Activated B cell treated with CpG ODN at 0.5 μM for 24 hours (primary cell): ENCODE measurements at regions of chr14 and their contacts with region 1.

Region 1: GRCh38 chr14:69354383-69355153 is 43.5 kb downstream of the ERH start:
- DNase-seq: peak; percentile 60
- ATAC-seq: peak; percentile 88
- H3K4me3 Mint-ChIP-seq: peak overlapping the region; percentile 86
- H3K27ac Mint-ChIP-seq: peak overlapping the region; percentile 99
- H3K4me1 Mint-ChIP-seq: peaks cover 52% of the 10 kb centered on the region
- H3K27me3 Mint-ChIP-seq: no peaks in the 10 kb centered on the region
- CTCF ChIP-seq: no peak

Region 2: GRCh38 chr14:69260861-69261564 is 93.6 kb before region 1 on chr14:
- CTCF ChIA-PET with region 1: no interaction called
- POLR2A ChIA-PET with region 1: no interaction called
- intact Hi-C with region 1: loop called (anchors 5 kb)
- DNase-seq: peak; percentile 52
- ATAC-seq: peak; percentile 76
- H3K4me3 Mint-ChIP-seq: peak overlapping the region; percentile 76
- H3K27ac Mint-ChIP-seq: no peak overlapping the region
- H3K4me1 Mint-ChIP-seq: peaks cover 13% of the 10 kb centered on the region
- H3K27me3 Mint-ChIP-seq: peaks cover 68% of the 10 kb centered on the region
- CTCF ChIP-seq: no peak

Region 3: DNA sequence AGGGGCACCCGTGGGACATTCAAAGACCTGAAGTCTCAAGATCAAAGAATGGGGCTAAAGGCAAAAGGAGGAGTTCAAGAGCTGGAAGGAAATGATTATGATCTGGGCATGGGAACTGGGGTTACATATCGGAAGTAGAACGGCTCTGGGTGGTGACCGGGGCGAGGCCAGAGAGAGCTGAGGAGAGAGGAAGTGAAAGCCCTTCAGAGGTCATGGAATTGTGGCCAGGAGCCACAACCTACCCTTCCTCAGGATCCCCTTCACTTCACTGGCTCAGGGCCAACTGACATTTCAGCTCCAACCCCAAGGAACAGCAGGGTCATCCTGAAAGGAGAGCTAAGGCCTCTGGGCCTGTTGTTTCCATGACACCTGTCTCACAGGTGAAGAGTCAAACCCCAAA is 36.8 kb before region 1 on chr14:
- CTCF ChIA-PET with region 1: no interaction called
- POLR2A ChIA-PET with region 1: no interaction called
- intact Hi-C with region 1: loop called (anchors 1 kb)
- DNase-seq: no peak
- ATAC-seq: peak; percentile 14
- H3K4me3 Mint-ChIP-seq: no peak overlapping the region
- H3K27ac Mint-ChIP-seq: no peak overlapping the region
- H3K4me1 Mint-ChIP-seq: peaks cover 18% of the 10 kb centered on the region
- H3K27me3 Mint-ChIP-seq: no peaks in the 10 kb centered on the region
- CTCF ChIP-seq: no peak

Region 4: DNA sequence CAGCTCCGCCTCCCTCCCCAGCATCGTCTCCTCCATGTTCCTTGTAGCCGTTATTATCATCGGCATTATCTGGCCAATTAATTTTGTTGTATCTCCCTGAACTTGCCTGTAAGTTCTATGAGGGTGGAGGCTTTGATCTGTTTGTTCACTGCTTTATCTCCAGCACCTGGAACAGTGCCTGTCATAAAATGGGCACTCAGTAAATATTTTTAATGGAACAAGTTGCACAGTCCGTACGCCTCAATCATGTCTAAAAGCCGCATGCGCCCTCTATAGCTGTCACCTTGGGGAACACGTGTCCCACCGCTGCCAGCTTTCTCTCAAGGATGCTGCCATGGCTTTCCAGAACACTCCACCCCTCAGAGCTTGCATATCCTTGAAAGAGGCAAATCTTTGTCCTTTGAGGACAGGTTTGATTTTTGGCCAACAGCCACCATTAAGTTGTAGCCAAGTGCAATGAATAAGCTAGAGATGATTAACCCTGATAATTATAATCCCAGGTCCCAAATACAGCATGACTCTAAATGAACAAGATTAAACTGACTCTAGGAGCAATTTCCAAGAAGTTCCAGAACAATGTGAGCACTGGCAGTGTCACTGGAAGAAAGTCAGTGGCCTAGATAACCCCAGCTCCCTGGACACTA is 11.6 kb before region 1 on chr14:
- CTCF ChIA-PET with region 1: no interaction called
- POLR2A ChIA-PET with region 1: no interaction called
- intact Hi-C with region 1: no loop called
- DNase-seq: no peak
- ATAC-seq: no peak
- H3K4me3 Mint-ChIP-seq: no peak overlapping the region
- H3K27ac Mint-ChIP-seq: no peak overlapping the region
- H3K4me1 Mint-ChIP-seq: no peaks in the 10 kb centered on the region
- H3K27me3 Mint-ChIP-seq: peaks cover 11% of the 10 kb centered on the region
- CTCF ChIP-seq: no peak